Body of pancreas (tissue), 4 donors: ENCODE measurements at regions of chr17 and their contacts with region 1.

Region 1: DNA sequence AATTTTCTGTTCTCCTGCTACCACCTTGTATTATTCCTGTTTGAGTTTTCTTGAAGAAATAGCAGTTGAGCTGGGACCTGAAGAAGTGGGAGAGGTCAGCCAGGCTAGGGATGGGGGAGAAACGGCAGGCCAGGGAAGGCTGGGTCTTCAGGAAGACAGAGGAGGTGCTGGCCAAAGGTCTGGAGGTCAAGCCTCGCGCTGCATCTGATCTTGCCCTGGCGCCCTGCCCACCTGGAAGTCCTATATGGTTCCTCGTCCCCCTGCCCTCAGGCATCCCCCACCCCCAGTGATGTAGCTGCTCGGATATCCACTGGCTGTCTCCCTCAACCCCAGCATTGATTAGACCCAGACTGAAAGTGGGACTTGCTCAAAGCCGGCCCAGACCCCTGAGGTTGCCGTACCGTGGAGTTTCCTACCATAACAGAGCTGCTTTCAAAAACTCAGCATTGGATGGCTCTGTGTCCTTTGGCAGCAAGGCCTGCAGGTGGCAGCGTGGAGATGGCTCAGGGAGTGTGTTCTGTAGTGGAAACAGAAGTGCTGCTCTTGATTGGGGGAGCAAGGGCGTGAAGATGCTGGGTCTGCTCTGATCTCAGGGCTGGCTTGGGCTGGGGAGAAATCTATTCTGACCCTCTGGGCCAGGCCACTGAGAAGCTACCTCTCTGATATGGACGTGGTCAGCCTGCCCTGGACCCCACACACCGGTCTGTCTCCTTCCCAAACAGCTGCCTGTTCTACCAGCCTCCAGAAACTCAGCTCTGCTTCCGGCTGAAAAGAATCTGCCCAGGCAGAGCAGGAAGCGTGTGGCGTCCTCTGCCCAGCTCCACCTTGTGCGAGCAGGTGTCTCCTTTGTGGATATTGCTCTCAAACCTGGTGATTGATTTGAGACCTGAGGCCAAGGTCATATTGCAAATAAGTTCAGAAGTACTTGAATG is 107.0 kb upstream of the CACNG5 start:
- DNase-seq: peak; percentile 73 to 79 (median 78)
- ATAC-seq: peak; percentile 74
- H3K4me3 ChIP-seq: no peak overlapping the region
- H3K27ac ChIP-seq: peak overlapping the region in 2 of 4 donors; percentile 7 to 10
- H3K4me1 ChIP-seq: peaks cover 29% of the 10 kb centered on the region
- H3K27me3 ChIP-seq: no peaks in the 10 kb centered on the region
- CTCF ChIP-seq: peak; percentile 53 to 81 (median 74)
- POLR2A ChIP-seq: no peak

Region 2: DNA sequence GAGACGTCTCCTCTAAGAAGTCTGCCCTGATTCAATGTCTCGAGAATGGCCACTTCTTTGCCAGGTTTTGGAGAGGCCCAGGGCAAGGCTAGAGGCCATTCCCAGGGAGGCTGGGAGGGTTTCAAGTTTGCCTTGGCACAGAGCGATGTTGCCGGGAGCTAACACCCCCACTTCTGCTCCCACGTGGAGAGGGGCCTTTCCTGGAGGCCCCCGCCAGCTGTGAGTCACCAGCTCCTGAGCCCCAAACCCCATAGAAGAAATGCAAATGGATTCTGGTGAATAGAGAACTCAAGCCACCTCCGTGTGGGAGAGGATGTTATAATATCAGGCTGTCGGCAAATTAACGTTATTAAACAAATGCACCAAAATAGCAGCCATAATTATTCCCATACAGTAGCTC is 169.2 kb after region 1 on chr17:
- intact Hi-C with region 1: loop called (anchors 5 kb)
- DNase-seq: no peak
- ATAC-seq: no peak
- H3K4me3 ChIP-seq: no peak overlapping the region
- H3K27ac ChIP-seq: no peak overlapping the region
- H3K4me1 ChIP-seq: peaks cover 6% of the 10 kb centered on the region
- H3K27me3 ChIP-seq: no peaks in the 10 kb centered on the region
- CTCF ChIP-seq: no peak
- POLR2A ChIP-seq: no peak

Region 3: GRCh38 chr17:66906321-66907278 is 178.7 kb after region 1 on chr17:
- intact Hi-C with region 1: loop called (anchors 5 kb)
- DNase-seq: peak; percentile 89 to 95 (median 92)
- ATAC-seq: peak; percentile 52
- H3K4me3 ChIP-seq: no peak overlapping the region
- H3K27ac ChIP-seq: no peak overlapping the region
- H3K4me1 ChIP-seq: peaks cover 21% of the 10 kb centered on the region
- H3K27me3 ChIP-seq: no peaks in the 10 kb centered on the region
- CTCF ChIP-seq: peak; percentile 72 to 93 (median 92)
- POLR2A ChIP-seq: no peak